Activated CD8-positive, alpha-beta memory T cell treated with anti-CD3 and anti-CD28 coated beads, Interleukin-2, amount 10 ng/mL, durations not matched to agents 7 days and 5 days (primary cell): ENCODE measurements at regions of chr4 and their contacts with region 1.

Region 1: DNA sequence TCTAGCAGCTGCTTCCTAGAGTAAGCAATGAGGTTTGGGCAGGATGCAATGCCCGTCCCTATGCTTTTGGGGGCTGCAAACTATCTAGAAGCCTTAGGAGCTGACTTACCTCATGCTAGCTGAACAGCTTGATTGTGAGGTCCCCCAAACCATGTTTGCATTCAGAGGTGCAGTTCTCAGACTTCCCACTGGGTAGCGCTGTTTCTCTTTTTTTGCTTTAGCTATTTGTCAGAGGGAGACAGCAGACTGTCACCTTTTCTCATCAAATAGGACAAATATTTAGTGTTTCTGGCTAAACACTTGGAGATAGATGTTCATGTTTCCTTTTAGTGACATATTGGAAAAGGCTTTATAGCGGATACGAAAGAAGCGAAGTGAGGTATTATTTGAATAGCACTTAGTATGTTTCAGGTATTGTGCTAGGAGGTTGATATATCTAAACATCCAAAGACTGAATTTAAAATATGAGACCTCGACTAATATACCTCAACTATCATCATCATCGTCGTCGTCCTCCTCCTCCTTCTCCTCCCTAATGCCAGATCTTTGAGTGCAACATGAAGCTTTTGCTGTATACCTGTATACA is 18.7 kb upstream of the TMEM192 start:
- DNase-seq: peak; percentile 84
- ATAC-seq: peak; percentile 78
- H3K4me3 Mint-ChIP-seq: no peak overlapping the region
- H3K27ac Mint-ChIP-seq: no peak overlapping the region
- H3K4me1 Mint-ChIP-seq: no peaks in the 10 kb centered on the region
- H3K27me3 Mint-ChIP-seq: peaks cover 48% of the 10 kb centered on the region

Region 2: GRCh38 chr4:164989471-164989870 is 141.9 kb before region 1 on chr4:
- CTCF ChIA-PET with region 1: no interaction called
- DNase-seq: no peak
- ATAC-seq: no peak
- H3K4me3 Mint-ChIP-seq: no peak overlapping the region
- H3K27ac Mint-ChIP-seq: no peak overlapping the region
- H3K4me1 Mint-ChIP-seq: no peaks in the 10 kb centered on the region
- H3K27me3 Mint-ChIP-seq: peaks cover 18% of the 10 kb centered on the region

Region 3: GRCh38 chr4:165112368-165113139 is 18.8 kb before region 1 on chr4 and contains the start of gene TMEM192:
- CTCF ChIA-PET with region 1: interaction called, 17 read pairs
- DNase-seq: peak; percentile 94
- ATAC-seq: peak; percentile 97
- H3K4me3 Mint-ChIP-seq: peak within 1 kb of the TSS; percentile 94
- H3K27ac Mint-ChIP-seq: peak within 1 kb of the TSS; percentile 92
- H3K4me1 Mint-ChIP-seq: peaks cover 24% of the 10 kb centered on the region
- H3K27me3 Mint-ChIP-seq: peaks cover 16% of the 10 kb centered on the region
- total RNA-seq, gene TMEM192: 6.4 to 7.3 TPM

Region 4: GRCh38 chr4:165118256-165118909 is 13.0 kb before region 1 on chr4:
- CTCF ChIA-PET with region 1: interaction called, 17 read pairs
- DNase-seq: no peak
- ATAC-seq: no peak
- H3K4me3 Mint-ChIP-seq: no peak overlapping the region
- H3K27ac Mint-ChIP-seq: no peak overlapping the region
- H3K4me1 Mint-ChIP-seq: peaks cover 20% of the 10 kb centered on the region
- H3K27me3 Mint-ChIP-seq: peaks cover 26% of the 10 kb centered on the region

Region 5: DNA sequence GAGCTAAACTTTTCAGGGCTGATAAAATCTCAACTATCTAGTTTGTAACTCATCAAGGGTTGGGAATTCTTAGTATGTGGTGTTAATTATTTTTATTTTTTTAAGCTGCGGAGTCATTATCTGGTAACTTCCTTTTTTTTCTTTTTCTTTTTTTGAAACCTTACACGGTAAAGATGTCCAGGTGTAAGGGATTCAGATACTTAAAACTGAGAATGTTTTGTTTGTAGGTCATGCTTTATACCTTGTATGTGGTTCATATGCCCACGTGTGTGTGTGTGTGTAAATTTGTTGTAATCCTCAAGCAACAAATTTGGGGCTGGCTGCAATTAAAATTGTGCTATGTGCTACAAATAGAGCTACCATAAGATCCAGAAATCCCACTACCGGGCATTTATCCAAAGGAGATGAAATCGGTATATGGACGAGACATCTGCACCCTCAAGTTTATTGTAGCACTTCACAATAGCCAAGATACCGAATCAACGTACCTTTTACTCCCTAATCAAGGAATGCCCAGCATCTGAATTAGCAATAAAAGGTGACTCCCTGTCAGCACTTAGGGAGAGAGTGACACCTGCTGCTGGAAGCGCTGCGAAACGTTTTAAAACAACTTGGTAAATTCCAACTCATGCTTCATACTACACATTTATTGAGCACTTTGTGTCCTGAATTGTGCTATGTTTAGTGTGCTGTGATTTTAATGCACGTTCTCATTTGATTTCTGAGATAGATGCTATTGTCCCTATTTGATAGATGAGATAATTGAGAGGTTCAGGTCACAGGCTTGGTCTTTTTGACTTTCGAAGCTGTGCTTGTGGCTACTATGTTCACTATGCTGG is 212.2 kb after region 1 on chr4:
- CTCF ChIA-PET with region 1: interaction called, 30 read pairs
- DNase-seq: no peak
- ATAC-seq: no peak
- H3K4me3 Mint-ChIP-seq: no peak overlapping the region
- H3K27ac Mint-ChIP-seq: no peak overlapping the region
- H3K4me1 Mint-ChIP-seq: peaks cover 3% of the 10 kb centered on the region
- H3K27me3 Mint-ChIP-seq: no peaks in the 10 kb centered on the region

Region 6: GRCh38 chr4:165351359-165352130 is 220.2 kb after region 1 on chr4:
- CTCF ChIA-PET with region 1: interaction called, 19 read pairs
- DNase-seq: no peak
- ATAC-seq: no peak
- H3K4me3 Mint-ChIP-seq: no peak overlapping the region
- H3K27ac Mint-ChIP-seq: no peak overlapping the region
- H3K4me1 Mint-ChIP-seq: peaks cover 1% of the 10 kb centered on the region
- H3K27me3 Mint-ChIP-seq: peaks cover 20% of the 10 kb centered on the region

Region 7: DNA sequence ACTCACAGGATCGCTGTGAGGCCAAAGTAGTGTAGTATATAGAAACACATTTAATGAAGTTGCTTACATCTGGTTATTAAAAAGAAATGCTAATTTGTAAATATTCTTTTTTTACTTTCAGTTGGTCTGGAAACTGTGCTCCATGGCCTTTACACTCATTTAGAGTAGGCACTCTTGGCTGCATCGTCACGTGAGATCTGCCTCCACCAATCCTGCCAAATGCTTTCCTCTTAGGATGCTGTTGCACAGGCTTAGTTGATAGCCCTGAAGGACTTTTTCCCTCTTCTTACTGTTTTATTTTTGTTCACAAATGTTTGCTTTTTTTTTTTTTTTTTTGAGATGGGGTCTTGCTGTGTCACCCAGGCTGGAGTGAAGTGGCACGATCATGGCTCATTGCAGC is 253.8 kb after region 1 on chr4:
- CTCF ChIA-PET with region 1: no interaction called
- DNase-seq: no peak
- ATAC-seq: no peak
- H3K4me3 Mint-ChIP-seq: no peak overlapping the region
- H3K27ac Mint-ChIP-seq: no peak overlapping the region
- H3K4me1 Mint-ChIP-seq: no peaks in the 10 kb centered on the region
- H3K27me3 Mint-ChIP-seq: peaks cover 68% of the 10 kb centered on the region

Region 8: GRCh38 chr4:165464813-165465381 is 333.6 kb after region 1 on chr4:
- CTCF ChIA-PET with region 1: interaction called, 12 read pairs
- DNase-seq: no peak
- ATAC-seq: peak; percentile 70
- H3K4me3 Mint-ChIP-seq: no peak overlapping the region
- H3K27ac Mint-ChIP-seq: no peak overlapping the region
- H3K4me1 Mint-ChIP-seq: no peaks in the 10 kb centered on the region
- H3K27me3 Mint-ChIP-seq: peaks cover 2% of the 10 kb centered on the region